Calu3 (cell line): ENCODE measurements at regions of chr19 and their contacts with region 1.

Region 1: GRCh38 chr19:9903336-9903735 is 33.0 kb downstream of the OLFM2 start:
- DNase-seq: no peak
- H3K4me3 Mint-ChIP-seq: no peak overlapping the region
- H3K27ac Mint-ChIP-seq: no peak overlapping the region
- H3K4me1 Mint-ChIP-seq: no peaks in the 10 kb centered on the region
- H3K27me3 Mint-ChIP-seq: no peaks in the 10 kb centered on the region
- CTCF ChIP-seq: no peak

Region 2: GRCh38 chr19:9891609-9892373 is 11.5 kb before region 1 on chr19:
- CTCF ChIA-PET with region 1: no interaction called
- intact Hi-C with region 1: no loop called
- DNase-seq: no peak
- H3K4me3 Mint-ChIP-seq: no peak overlapping the region
- H3K27ac Mint-ChIP-seq: no peak overlapping the region
- H3K4me1 Mint-ChIP-seq: no peaks in the 10 kb centered on the region
- H3K27me3 Mint-ChIP-seq: no peaks in the 10 kb centered on the region
- CTCF ChIP-seq: no peak

Region 3: GRCh38 chr19:11554160-11554559 is 1650.8 kb after region 1 on chr19:
- CTCF ChIA-PET with region 1: interaction called, 11 read pairs
- intact Hi-C with region 1: no loop called
- DNase-seq: no peak
- H3K4me3 Mint-ChIP-seq: no peak overlapping the region
- H3K27ac Mint-ChIP-seq: no peak overlapping the region
- H3K4me1 Mint-ChIP-seq: peaks cover 16% of the 10 kb centered on the region
- H3K27me3 Mint-ChIP-seq: no peaks in the 10 kb centered on the region
- CTCF ChIP-seq: no peak